ENCODE measurements at regions of chr17 and their contacts with region 1.

Region 1: DNA sequence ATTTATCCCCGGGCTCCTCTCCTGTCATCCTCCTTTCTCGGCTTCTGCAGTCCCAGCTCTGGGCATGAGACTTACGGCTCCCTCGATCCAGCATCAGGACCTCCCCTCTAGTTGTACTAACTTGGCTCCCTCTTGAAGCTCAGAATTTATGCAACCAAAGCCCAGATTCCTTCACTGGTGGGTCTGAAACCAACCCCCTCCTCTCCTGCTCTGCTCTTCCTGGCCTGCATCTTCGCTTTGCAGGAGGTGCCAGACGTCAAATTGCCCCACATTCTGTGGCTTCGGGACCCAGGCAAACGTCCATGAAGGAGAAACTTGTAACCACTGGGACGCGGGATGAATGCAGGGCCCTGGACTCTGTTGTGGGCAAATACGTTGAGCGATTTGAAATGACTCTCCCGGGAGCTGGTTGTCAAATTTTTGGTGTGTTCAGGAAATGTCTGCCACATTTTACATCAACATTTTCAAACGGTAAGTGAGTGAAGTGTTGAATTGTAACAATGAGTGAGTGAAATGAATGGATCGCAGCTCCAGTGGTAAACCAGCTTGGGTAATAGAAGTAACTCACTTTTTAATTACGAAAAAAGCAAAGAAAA is 29.3 kb upstream of the ELAC2 start:
- DNase-seq: no peak
- ATAC-seq: no peak
- H3K4me3 ChIP-seq: no peak overlapping the region
- H3K4me3 Mint-ChIP-seq: no peak overlapping the region
- H3K27ac ChIP-seq: no peak overlapping the region
- H3K27ac Mint-ChIP-seq: no peak overlapping the region
- H3K4me1 ChIP-seq: no peaks in the 10 kb centered on the region
- H3K4me1 Mint-ChIP-seq: no peaks in the 10 kb centered on the region
- H3K27me3 ChIP-seq: peaks cover 0 to 4% (median 0%) of the 10 kb centered on the region in 4 experiments
- H3K27me3 Mint-ChIP-seq: peaks cover 26% of the 10 kb centered on the region
- CTCF ChIP-seq: no peak

Region 2: GRCh38 chr17:12842936-12843335 is 204.2 kb before region 1 on chr17:
- CTCF ChIA-PET with region 1: no interaction called
- POLR2A ChIA-PET with region 1: no interaction called
- intact Hi-C with region 1: no loop called
- DNase-seq: no peak
- ATAC-seq: no peak
- H3K4me3 ChIP-seq: no peak overlapping the region
- H3K4me3 Mint-ChIP-seq: no peak overlapping the region
- H3K27ac ChIP-seq: no peak overlapping the region
- H3K27ac Mint-ChIP-seq: no peak overlapping the region
- H3K4me1 ChIP-seq: no peaks in the 10 kb centered on the region
- H3K4me1 Mint-ChIP-seq: no peaks in the 10 kb centered on the region
- H3K27me3 ChIP-seq: no peaks in the 10 kb centered on the region
- H3K27me3 Mint-ChIP-seq: no peaks in the 10 kb centered on the region
- CTCF ChIP-seq: no peak

Region 3: DNA sequence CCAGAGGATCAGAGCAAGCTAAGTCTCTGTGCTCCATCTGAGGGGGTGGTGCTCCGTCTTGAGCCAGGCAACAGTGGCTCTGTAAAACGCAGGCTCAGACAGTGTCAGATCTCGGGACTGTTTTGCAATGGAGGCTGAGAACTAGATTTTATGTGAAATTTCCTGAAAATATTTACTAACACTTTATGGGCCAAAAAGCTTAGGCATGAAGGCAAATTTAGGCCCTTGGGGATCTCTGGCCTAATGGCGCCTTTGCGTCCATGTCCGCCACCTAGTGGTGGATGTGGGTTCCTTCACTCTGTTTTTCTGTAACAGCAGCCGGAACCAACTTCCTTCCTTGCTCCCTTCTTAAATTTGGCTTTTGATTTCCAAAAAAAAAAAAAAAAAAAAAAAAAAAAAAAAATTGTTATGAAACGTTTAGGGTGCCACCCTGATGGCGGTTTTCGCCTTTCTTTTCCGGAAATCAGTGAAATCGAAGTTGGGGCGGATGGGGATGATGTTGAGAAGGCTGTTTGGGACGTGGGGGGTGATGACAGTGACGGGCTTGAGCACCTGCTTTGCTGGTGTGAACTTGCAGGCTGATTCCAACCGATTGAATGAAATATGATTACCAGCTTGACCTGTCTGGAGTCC is 15.3 kb before region 1 on chr17:
- CTCF ChIA-PET with region 1: interaction called, 50 read pairs
- POLR2A ChIA-PET with region 1: no interaction called
- intact Hi-C with region 1: no loop called
- DNase-seq: peak; percentile 68
- ATAC-seq: peak; percentile 73
- H3K4me3 ChIP-seq: peak overlapping the region in 2 of 5 experiments; percentile 27 to 36
- H3K4me3 Mint-ChIP-seq: peak overlapping the region; percentile 66
- H3K27ac ChIP-seq: no peak overlapping the region
- H3K27ac Mint-ChIP-seq: no peak overlapping the region
- H3K4me1 ChIP-seq: peaks cover 0 to 5% of the 10 kb centered on the region in 2 donors
- H3K4me1 Mint-ChIP-seq: peaks cover 6% of the 10 kb centered on the region
- H3K27me3 ChIP-seq: peaks cover 0 to 3% (median 0%) of the 10 kb centered on the region in 4 experiments
- H3K27me3 Mint-ChIP-seq: peaks cover 19% of the 10 kb centered on the region
- CTCF ChIP-seq: peak; percentile 86

Region 4: GRCh38 chr17:13114601-13115031 is 67.5 kb after region 1 on chr17:
- CTCF ChIA-PET with region 1: no interaction called
- POLR2A ChIA-PET with region 1: no interaction called
- intact Hi-C with region 1: no loop called
- DNase-seq: peak; percentile 8
- ATAC-seq: no peak
- H3K4me3 ChIP-seq: no peak overlapping the region
- H3K4me3 Mint-ChIP-seq: no peak overlapping the region
- H3K27ac ChIP-seq: no peak overlapping the region
- H3K27ac Mint-ChIP-seq: no peak overlapping the region
- H3K4me1 ChIP-seq: peaks cover 0 to 3% of the 10 kb centered on the region in 2 donors
- H3K4me1 Mint-ChIP-seq: no peaks in the 10 kb centered on the region
- H3K27me3 ChIP-seq: peaks cover 0 to 3% (median 0%) of the 10 kb centered on the region in 4 experiments
- H3K27me3 Mint-ChIP-seq: peaks cover 8% of the 10 kb centered on the region
- CTCF ChIP-seq: peak; percentile 46

Region 5: GRCh38 chr17:13154398-13154797 is 107.3 kb after region 1 on chr17:
- CTCF ChIA-PET with region 1: no interaction called
- POLR2A ChIA-PET with region 1: no interaction called
- intact Hi-C with region 1: no loop called
- DNase-seq: no peak
- ATAC-seq: no peak
- H3K4me3 ChIP-seq: no peak overlapping the region
- H3K4me3 Mint-ChIP-seq: no peak overlapping the region
- H3K27ac ChIP-seq: no peak overlapping the region
- H3K27ac Mint-ChIP-seq: no peak overlapping the region
- H3K4me1 ChIP-seq: no peaks in the 10 kb centered on the region
- H3K4me1 Mint-ChIP-seq: no peaks in the 10 kb centered on the region
- H3K27me3 ChIP-seq: no peaks in the 10 kb centered on the region
- H3K27me3 Mint-ChIP-seq: no peaks in the 10 kb centered on the region
- CTCF ChIP-seq: no peak